ENCODE measurements at regions of chr12 and their contacts with region 1.

Region 1: DNA sequence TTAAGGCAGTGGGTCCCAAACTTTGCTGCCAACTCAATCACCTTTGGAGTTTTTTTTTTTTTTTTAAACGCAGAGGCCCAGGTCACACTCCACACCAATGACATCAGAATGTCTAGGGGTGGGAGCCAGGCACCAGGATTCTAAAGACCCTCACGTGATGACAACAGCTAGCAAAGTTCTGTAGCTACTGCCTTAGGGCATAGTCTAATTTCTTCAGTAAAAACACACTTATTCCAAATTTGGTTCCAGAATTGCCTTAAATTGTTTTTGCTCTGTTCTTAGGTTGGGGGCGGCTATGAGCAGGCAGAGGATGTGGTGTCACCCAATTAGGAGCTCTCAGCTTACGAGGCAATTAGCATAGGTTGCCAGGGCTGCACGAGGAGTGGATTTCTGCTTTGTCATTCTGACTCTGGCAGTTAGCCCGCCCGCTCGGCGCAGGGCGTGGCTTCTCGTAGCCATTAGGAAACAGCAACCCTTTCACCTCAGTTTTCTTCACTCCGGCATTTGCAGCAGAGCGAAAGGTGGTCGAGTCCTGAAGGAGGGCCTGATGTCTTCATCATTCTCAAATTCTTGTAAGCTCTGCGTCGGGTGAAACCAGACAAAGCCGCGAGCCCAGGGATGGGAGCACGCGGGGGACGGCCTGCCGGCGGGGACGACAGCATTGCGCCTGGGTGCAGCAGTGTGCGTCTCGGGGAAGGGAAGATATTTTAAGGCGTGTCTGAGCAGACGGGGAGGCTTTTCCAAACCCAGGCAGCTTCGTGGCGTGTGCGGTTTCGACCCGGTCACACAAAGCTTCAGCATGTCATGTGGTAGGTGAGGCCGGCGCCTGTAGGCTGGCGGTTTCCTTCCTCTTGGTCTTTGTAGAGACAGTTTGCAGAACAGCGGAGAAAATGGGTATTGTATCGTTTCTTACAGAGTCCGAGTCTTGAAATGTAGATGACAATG is 16.7 kb upstream of the EID3 start:
- DNase-seq: peak; percentile 70 to 96 (median 86)
- ATAC-seq: peak; percentile 84
- H3K4me3 ChIP-seq: peak overlapping the region; percentile 90
- H3K4me3 Mint-ChIP-seq: peak overlapping the region; percentile 98
- H3K27ac ChIP-seq: peak overlapping the region; percentile 67 to 84
- H3K27ac Mint-ChIP-seq: peak overlapping the region; percentile 96
- H3K4me1 ChIP-seq: peaks cover 35% of the 10 kb centered on the region
- H3K4me1 Mint-ChIP-seq: peaks cover 35% of the 10 kb centered on the region
- H3K27me3 ChIP-seq: peaks cover 0 to 7% of the 10 kb centered on the region in 2 experiments
- H3K27me3 Mint-ChIP-seq: no peaks in the 10 kb centered on the region
- CTCF ChIP-seq: no peak

Region 2: GRCh38 chr12:104115587-104115975 is 171.2 kb before region 1 on chr12:
- CTCF ChIA-PET with region 1: no interaction called
- POLR2A ChIA-PET with region 1: no interaction called
- intact Hi-C with region 1: no loop called
- DNase-seq: no peak
- ATAC-seq: no peak
- H3K4me3 ChIP-seq: no peak overlapping the region
- H3K4me3 Mint-ChIP-seq: no peak overlapping the region
- H3K27ac ChIP-seq: no peak overlapping the region
- H3K27ac Mint-ChIP-seq: no peak overlapping the region
- H3K4me1 ChIP-seq: no peaks in the 10 kb centered on the region
- H3K4me1 Mint-ChIP-seq: no peaks in the 10 kb centered on the region
- H3K27me3 ChIP-seq: no peaks in the 10 kb centered on the region
- H3K27me3 Mint-ChIP-seq: no peaks in the 10 kb centered on the region
- CTCF ChIP-seq: no peak

Region 3: DNA sequence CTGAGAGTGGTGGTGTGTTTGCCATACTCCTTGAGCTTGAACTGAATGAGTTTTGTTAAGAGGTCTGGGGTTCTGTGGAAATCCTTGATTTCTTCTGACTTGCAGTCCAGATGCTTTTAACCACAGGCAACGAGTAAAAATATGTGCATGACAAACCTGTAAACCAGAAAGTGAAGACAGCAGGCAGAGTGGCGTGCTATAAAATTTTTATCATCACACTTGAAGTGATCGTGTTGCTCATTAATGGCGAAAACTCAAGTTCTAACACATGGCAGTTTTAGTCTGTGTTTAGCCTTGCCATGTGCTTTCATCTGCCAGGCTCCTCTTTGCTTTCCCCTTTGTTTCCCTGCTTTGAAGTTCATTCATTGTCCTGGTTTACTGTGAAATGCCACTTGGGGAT is 43.3 kb before region 1 on chr12:
- CTCF ChIA-PET with region 1: no interaction called
- POLR2A ChIA-PET with region 1: no interaction called
- intact Hi-C with region 1: no loop called
- DNase-seq: no peak
- ATAC-seq: no peak
- H3K4me3 ChIP-seq: no peak overlapping the region
- H3K4me3 Mint-ChIP-seq: no peak overlapping the region
- H3K27ac ChIP-seq: no peak overlapping the region
- H3K27ac Mint-ChIP-seq: no peak overlapping the region
- H3K4me1 ChIP-seq: no peaks in the 10 kb centered on the region
- H3K4me1 Mint-ChIP-seq: no peaks in the 10 kb centered on the region
- H3K27me3 ChIP-seq: no peaks in the 10 kb centered on the region
- H3K27me3 Mint-ChIP-seq: peaks cover 5% of the 10 kb centered on the region
- CTCF ChIP-seq: no peak

Region 4: DNA sequence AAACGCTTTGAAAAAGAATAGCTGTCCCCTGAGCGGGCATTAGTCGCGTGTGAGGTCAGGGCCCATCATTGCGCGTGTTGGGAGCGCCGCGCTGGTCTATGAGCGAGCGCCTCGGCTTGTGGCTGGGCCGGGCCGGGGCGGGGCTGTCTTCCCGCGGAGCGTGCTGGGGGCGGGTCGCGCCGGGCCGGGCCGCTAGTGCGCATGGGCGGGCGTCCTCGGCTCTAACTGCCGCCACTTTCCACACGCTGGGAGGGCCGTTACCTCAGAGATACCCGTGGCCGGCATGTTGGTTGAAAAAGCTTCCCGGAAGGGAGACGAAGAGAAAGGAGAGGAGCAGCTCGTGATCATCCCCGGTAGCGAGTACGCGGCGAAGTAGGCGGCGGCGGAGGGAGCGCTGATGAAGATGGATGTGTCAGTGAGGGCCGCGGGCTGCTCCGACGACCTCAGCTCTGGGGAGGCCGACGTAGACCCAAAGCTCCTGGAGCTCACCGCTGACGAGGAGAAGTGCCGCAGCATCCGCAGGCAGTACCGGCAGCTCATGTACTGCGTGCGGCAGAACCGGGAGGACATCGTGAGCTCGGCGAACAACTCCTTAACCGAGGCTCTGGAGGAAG is 16.8 kb after region 1 on chr12 and contains the start of gene EID3:
- CTCF ChIA-PET with region 1: interaction called, 11 read pairs
- POLR2A ChIA-PET with region 1: interaction called, 102 read pairs
- intact Hi-C with region 1: loop called (anchors 1 to 2 kb)
- DNase-seq: peak; percentile 81 to 94 (median 90)
- ATAC-seq: peak; percentile 93
- H3K4me3 ChIP-seq: peak within 1 kb of the TSS; percentile 73
- H3K4me3 Mint-ChIP-seq: peak within 1 kb of the TSS; percentile 92
- H3K27ac ChIP-seq: peak within 1 kb of the TSS; percentile 75 to 84
- H3K27ac Mint-ChIP-seq: peak within 1 kb of the TSS; percentile 99
- H3K4me1 ChIP-seq: peaks cover 23% of the 10 kb centered on the region
- H3K4me1 Mint-ChIP-seq: peaks cover 68% of the 10 kb centered on the region
- H3K27me3 ChIP-seq: no peaks in the 10 kb centered on the region
- H3K27me3 Mint-ChIP-seq: no peaks in the 10 kb centered on the region
- CTCF ChIP-seq: no peak
- total RNA-seq, gene EID3: 13.5 to 14.3 TPM

Region 5: DNA sequence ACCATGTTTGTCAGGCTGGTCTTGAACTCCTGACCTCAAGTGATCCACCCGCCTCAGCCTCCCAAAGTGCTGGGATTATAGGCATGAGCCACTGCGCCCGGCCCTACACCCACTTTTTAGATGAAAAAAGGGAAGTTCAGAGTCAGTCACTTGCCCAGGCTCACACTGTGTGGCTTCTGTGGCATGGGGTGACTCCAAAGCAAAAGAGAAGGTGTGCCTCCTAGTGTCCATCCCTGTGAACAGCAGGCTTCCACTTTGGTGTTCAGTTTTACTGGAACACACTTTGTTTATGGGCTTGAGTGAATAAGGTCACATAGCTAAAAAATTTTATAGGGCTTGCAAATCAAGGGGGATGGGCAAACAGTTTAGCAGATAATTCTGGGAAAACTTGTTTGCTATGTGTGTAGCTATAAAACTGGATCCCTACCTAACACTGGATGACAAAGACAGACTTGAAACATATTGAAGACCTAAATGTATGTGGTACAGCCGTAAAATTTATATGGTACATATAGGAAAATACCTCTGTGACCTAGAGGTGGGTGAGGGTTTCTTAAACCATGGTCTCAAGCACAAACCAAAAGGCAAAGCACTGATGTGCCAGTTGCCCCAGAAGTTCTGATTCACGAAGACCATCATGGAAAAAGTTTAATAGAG is 71.7 kb after region 1 on chr12:
- CTCF ChIA-PET with region 1: no interaction called
- POLR2A ChIA-PET with region 1: no interaction called
- intact Hi-C with region 1: loop called in 1 of 2 experiments (anchors 5 kb)
- DNase-seq: peak; percentile 47 to 83 (median 58)
- ATAC-seq: peak; percentile 96
- H3K4me3 ChIP-seq: no peak overlapping the region
- H3K4me3 Mint-ChIP-seq: no peak overlapping the region
- H3K27ac ChIP-seq: no peak overlapping the region
- H3K27ac Mint-ChIP-seq: no peak overlapping the region
- H3K4me1 ChIP-seq: no peaks in the 10 kb centered on the region
- H3K4me1 Mint-ChIP-seq: no peaks in the 10 kb centered on the region
- H3K27me3 ChIP-seq: no peaks in the 10 kb centered on the region
- H3K27me3 Mint-ChIP-seq: no peaks in the 10 kb centered on the region
- CTCF ChIP-seq: peak; percentile 77

Region 6: DNA sequence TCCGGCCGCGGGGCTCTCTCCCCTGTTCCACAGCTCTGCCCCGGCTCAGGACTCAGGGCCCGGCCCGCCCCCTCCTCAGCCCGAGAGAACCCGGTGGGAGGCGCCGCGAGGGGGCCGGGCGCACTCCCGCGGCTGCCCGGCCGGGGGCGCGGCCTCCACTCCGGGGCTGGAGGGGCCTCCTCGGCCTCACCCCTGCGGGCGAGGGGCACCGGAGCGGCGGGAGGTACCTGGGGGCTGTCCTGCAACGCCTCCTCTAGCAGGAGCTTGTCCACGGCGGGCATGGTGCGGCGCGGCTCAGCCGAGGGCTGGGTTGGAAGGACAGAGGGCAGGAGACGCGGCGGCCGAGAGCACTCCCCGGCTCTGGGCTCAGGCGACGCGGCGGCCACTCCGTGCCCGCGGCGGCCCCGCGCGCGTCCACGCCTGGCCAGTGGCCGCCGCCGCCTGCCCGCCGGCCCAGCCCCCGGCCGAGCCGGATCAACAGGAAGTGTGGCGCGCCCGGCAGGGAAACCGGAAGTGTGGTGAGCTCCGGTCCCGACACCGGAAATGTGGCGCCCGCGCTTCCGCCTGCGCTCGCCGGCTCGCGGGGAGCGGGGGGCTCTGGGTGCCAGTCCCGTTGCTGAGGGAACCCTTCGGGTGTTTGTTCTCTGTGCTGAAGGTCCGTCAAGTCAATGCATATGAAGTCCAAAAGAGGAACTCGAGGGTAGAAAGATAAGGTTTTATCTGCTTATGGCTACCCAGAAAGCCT is 949.1 kb after region 1 on chr12 and contains the start of gene APPL2:
- CTCF ChIA-PET with region 1: no interaction called
- POLR2A ChIA-PET with region 1: interaction called, 8 read pairs
- intact Hi-C with region 1: loop called in 1 of 2 experiments (anchors 5 kb)
- DNase-seq: peak; percentile 55 to 90 (median 80)
- ATAC-seq: peak; percentile 76
- H3K4me3 ChIP-seq: peak within 1 kb of the TSS; percentile 74
- H3K4me3 Mint-ChIP-seq: peak within 1 kb of the TSS; percentile 94
- H3K27ac ChIP-seq: peak within 1 kb of the TSS; percentile 68 to 83
- H3K27ac Mint-ChIP-seq: peak within 1 kb of the TSS; percentile 90
- H3K4me1 ChIP-seq: peaks cover 39% of the 10 kb centered on the region
- H3K4me1 Mint-ChIP-seq: peaks cover 47% of the 10 kb centered on the region
- H3K27me3 ChIP-seq: no peaks in the 10 kb centered on the region
- H3K27me3 Mint-ChIP-seq: no peaks in the 10 kb centered on the region
- CTCF ChIP-seq: peak; percentile 48
- total RNA-seq, gene APPL2: 58.8 to 59.9 TPM

Measured in CD4-positive, alpha-beta T cell (primary cell).